ENCODE measurements at regions of chr1 and their contacts with region 1.

Region 1: DNA sequence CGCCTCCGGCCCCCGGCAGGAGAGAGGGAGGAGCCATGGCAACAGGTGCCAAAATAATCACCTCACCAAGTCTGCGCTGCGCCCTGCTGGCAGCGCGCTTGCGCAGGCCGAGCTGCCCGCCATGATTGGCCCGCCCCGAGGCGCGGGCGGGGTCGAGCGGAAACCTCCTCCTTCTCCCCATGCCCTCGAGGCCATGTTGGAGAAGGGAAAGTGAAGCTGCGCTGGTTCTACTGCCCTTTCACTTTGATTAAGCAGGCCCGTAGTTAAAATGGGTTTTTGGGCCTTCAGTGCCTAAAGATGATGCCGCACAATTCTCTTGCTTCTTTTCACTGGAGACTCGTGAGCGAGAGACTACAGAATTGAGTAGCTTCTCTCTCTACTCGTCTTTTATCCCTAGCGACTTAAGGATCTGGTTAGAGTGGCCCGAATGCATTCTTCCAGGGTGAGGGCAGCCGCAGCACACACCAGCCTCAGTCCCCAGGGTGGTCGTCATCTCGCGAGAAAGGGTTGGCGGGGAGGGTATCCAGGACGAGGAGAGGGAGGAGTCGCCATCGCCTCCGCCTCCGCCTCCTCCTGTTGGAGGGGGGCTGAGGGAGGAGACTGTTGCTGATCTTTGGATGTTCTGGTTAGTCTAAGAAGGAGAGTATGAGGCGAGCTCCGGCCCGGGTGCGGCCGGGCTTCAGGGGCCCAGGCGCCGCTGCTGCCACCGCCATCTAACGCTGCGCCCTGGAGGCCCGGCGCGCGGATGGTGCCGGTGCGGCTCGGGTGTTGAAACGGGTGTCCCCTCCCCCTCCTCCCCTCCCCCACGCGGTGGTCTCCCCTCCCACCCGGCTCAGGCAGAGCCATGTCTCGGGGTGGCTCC is at the start of gene DCAF6:
- DNase-seq: peak; percentile 97
- H3K4me3 ChIP-seq: peak within 1 kb of the TSS; percentile 68 to 97 (median 83)
- H3K27ac ChIP-seq: peak within 1 kb of the TSS; percentile 95 to 98 (median 97)
- H3K4me1 ChIP-seq: peaks cover 0 to 58% (median 31%) of the 10 kb centered on the region in 4 donors
- H3K27me3 ChIP-seq: no peaks in the 10 kb centered on the region
- CTCF ChIP-seq: no peak
- EP300 ChIP-seq: no peak
- POLR2A ChIP-seq: peak; percentile 97
- total RNA-seq, gene DCAF6: 59.5 to 173 (median 93.4) TPM

Region 2: DNA sequence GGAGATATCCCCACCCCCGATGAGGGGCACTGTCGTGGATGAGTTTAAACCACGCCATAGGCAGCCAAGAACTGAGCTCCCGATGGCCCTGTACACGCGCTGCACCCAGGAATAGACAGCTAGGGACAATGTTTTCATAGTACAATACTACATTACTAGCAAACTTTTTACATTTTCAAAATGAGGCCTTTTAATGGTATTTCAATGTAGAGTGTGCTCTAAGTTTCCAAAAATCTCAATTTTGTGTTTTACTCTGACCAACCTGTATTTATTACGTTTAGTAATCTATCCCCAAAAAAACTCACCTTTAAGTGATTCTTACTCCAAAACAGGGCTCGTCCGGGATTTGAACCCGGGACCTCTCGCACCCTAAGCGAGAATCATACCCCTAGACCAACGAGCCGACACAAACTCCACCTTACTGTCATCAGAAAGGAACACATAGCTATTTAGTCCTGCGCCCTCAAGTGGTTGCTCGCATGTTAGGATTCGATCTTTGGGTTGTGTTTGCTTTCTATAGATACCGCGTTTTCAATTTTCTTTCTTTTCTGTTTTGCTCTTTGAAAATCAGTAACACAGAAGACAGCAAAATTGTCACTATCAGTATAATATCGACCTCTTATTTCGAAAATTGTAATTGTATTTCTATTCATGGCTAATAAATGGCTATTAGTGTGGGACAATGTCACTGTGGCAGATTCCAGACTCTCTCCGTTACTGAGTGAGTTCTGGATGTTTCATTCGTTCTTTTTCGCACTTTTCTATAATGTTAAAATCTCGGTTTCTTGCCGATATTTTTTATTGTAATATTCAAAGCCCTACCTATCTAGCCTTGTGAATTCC is 220.9 kb before region 1 on chr1:
- in situ Hi-C with region 1: loop called in 3 of 4 experiments (anchors 10 to 25 kb)
- intact Hi-C with region 1: loop called (anchors 2 kb)
- DNase-seq: peak; percentile 90
- H3K4me3 ChIP-seq: peak overlapping the region; percentile 35 to 62 (median 47)
- H3K27ac ChIP-seq: peak overlapping the region; percentile 83 to 92 (median 88)
- H3K4me1 ChIP-seq: peaks cover 0 to 24% (median 13%) of the 10 kb centered on the region in 4 donors
- H3K27me3 ChIP-seq: no peaks in the 10 kb centered on the region
- CTCF ChIP-seq: peak; percentile 78 to 98 (median 83)
- EP300 ChIP-seq: no peak
- POLR2A ChIP-seq: no peak

Region 3: GRCh38 chr1:167721617-167722151 is 214.6 kb before region 1 on chr1 and contains the start of gene MPZL1:
- in situ Hi-C with region 1: loop called in 3 of 4 experiments (anchors 10 to 25 kb)
- intact Hi-C with region 1: loop called (anchors 2 kb)
- DNase-seq: peak; percentile 98
- H3K4me3 ChIP-seq: peak within 1 kb of the TSS; percentile 88 to 100 (median 98)
- H3K27ac ChIP-seq: peak within 1 kb of the TSS; percentile 92 to 98 (median 94)
- H3K4me1 ChIP-seq: peaks cover 13 to 53% (median 33%) of the 10 kb centered on the region in 4 donors
- H3K27me3 ChIP-seq: no peaks in the 10 kb centered on the region
- CTCF ChIP-seq: no peak
- EP300 ChIP-seq: no peak
- POLR2A ChIP-seq: peak; percentile 77
- total RNA-seq, gene MPZL1: 32.9 to 79.5 (median 58.2) TPM

Region 4: DNA sequence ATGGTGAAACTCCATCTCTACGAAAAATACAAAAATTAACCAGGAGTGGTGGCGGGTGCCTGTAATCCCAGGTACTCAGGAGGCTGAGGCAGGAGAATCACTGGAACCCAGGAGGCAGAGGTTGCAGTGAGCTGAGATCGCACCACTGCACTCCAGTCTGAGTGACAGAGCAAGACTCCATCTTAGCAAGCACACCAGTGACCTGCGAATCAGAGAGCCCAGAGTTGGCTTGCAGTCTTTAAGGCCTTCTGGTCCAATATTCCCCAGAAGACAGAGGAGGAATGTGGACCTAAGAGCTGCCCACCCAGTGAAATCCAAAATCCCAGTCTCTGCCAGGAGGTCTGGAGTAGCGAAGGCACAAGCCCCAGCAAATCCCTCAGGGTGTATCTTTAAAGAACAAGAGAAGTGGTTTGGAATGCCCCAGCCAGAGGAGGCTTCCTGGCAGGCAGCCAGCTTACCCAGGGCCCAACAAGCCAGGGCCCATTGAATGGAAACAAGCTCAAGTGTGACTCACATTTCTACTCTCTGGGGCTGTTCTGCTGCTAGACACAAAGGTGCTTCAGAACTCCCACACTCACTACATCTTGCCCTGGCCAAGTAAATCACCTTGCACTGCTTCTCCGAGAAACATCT is 176.5 kb after region 1 on chr1:
- in situ Hi-C with region 1: no loop called
- intact Hi-C with region 1: no loop called
- DNase-seq: no peak
- H3K4me3 ChIP-seq: no peak overlapping the region
- H3K27ac ChIP-seq: no peak overlapping the region
- H3K4me1 ChIP-seq: peaks cover 0 to 20% (median 6%) of the 10 kb centered on the region in 4 donors
- H3K27me3 ChIP-seq: no peaks in the 10 kb centered on the region
- CTCF ChIP-seq: no peak
- EP300 ChIP-seq: no peak
- POLR2A ChIP-seq: no peak

Measured in transverse colon (tissue), 4 donors.